Mammary epithelial cell (primary cell): ENCODE measurements at regions of chr9 and their contacts with region 1.

Region 1: GRCh38 chr9:109098171-109098959 is 21.4 kb downstream of the TMEM245 start:
- DNase-seq: peak; percentile 55
- H3K4me3 ChIP-seq: peak overlapping the region in 1 of 3 experiments; percentile 7
- H3K27ac ChIP-seq: peak overlapping the region; percentile 58
- H3K4me1 ChIP-seq: peaks cover 38% of the 10 kb centered on the region
- H3K27me3 ChIP-seq: no peaks in the 10 kb centered on the region
- CTCF ChIP-seq: peak; percentile 7 to 35

Region 2: DNA sequence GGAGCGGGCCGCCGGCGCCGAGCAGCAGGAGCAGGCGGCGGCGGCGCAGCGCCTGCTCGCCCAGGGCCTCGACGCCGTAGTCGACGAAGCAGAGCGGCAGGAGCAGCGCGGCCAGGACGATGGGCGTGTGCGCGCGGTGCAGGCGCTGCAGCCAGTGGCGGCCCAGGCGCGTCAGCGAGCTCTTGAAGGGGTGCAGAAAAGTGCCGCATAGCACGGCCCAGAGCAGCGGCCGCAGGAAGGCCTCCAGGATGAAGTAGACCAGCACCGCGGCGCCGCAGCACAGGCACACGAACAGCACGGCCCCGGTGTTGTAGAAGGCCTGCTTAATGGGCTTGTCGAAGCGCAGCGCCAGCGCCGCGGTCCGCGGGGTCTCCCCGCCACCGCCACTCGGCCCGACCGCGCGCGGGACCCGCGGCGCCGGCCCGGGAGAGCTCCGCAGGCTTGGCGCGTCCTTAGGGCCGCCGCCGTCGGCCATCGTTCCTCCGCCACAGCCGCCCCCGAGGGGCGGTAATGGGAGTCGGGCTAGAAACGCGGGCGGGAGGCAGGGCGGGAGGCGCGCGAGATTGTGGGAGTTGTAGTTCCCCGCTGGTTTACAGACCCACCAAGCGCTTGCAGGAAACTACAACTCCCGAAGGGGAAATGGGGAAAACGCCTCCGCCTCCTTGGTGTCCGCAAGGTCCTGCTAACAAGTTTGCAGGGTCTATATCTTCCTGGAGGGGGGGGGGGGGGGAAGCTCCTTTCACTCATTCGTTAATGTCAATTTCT is 21.3 kb after region 1 on chr9 and contains the start of gene TMEM245:
- CTCF ChIA-PET with region 1: no interaction called
- dilution Hi-C with region 1: no loop called
- in situ Hi-C with region 1: no loop called
- intact Hi-C with region 1: loop called (anchors 2 kb)
- DNase-seq: peak; percentile 99
- H3K4me3 ChIP-seq: peak within 1 kb of the TSS; percentile 70 to 91 (median 89)
- H3K27ac ChIP-seq: peak within 1 kb of the TSS; percentile 46
- H3K4me1 ChIP-seq: peaks cover 15% of the 10 kb centered on the region
- H3K27me3 ChIP-seq: no peaks in the 10 kb centered on the region
- CTCF ChIP-seq: no peak
- total RNA-seq, gene TMEM245: 33.1 to 70.3 TPM

Region 3: GRCh38 chr9:109401168-109401989 is 303.0 kb after region 1 on chr9:
- CTCF ChIA-PET with region 1: no interaction called
- dilution Hi-C with region 1: no loop called
- in situ Hi-C with region 1: no loop called
- intact Hi-C with region 1: loop called (anchors 10 kb)
- DNase-seq: peak; percentile 53
- H3K4me3 ChIP-seq: no peak overlapping the region
- H3K27ac ChIP-seq: no peak overlapping the region
- H3K4me1 ChIP-seq: no peaks in the 10 kb centered on the region
- H3K27me3 ChIP-seq: no peaks in the 10 kb centered on the region
- CTCF ChIP-seq: peak; percentile 88 to 94